Breast epithelium (tissue), 4 donors: ENCODE measurements at regions of chr19 and their contacts with region 1.

Region 1: GRCh38 chr19:29429021-29429420 is 96.8 kb upstream of the VSTM2B start:
- DNase-seq: no peak
- H3K4me3 ChIP-seq: no peak overlapping the region
- H3K27ac ChIP-seq: no peak overlapping the region
- H3K4me1 ChIP-seq: no peaks in the 10 kb centered on the region
- H3K27me3 ChIP-seq: peaks cover 0 to 18% of the 10 kb centered on the region in 2 donors
- CTCF ChIP-seq: no peak
- POLR2A ChIP-seq: no peak

Region 2: GRCh38 chr19:29379257-29380021 is 49.6 kb before region 1 on chr19:
- intact Hi-C with region 1: no loop called
- DNase-seq: peak; percentile 10 to 31
- H3K4me3 ChIP-seq: no peak overlapping the region
- H3K27ac ChIP-seq: no peak overlapping the region
- H3K4me1 ChIP-seq: no peaks in the 10 kb centered on the region
- H3K27me3 ChIP-seq: peaks cover 0 to 9% of the 10 kb centered on the region in 2 donors
- CTCF ChIP-seq: no peak
- POLR2A ChIP-seq: no peak

Region 3: DNA sequence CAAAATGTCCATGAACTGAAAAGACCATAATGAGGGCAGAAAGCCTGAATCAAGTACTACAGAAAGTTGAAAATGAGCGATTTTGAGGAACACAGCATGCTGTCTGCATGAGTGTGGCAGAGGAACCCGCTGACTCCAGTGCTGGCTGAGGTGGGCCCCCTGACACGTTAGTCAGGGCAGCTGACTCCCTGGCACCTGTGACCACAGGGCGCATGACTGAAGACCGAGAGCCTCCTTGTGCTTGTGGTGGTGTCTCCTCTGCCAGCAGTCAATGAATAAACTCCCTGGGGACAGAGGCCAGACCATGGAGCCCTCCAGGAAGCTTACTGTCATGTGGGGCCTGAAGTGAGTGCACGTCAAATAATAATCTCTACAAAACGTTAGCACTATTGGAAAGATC is 58.4 kb after region 1 on chr19:
- intact Hi-C with region 1: loop called (anchors 2 kb)
- DNase-seq: no peak
- H3K4me3 ChIP-seq: no peak overlapping the region
- H3K27ac ChIP-seq: no peak overlapping the region
- H3K4me1 ChIP-seq: no peaks in the 10 kb centered on the region
- H3K27me3 ChIP-seq: peaks cover 0 to 14% of the 10 kb centered on the region in 2 donors
- CTCF ChIP-seq: no peak
- POLR2A ChIP-seq: no peak